ENCODE measurements at regions of chr16 and their contacts with region 1.

Region 1: DNA sequence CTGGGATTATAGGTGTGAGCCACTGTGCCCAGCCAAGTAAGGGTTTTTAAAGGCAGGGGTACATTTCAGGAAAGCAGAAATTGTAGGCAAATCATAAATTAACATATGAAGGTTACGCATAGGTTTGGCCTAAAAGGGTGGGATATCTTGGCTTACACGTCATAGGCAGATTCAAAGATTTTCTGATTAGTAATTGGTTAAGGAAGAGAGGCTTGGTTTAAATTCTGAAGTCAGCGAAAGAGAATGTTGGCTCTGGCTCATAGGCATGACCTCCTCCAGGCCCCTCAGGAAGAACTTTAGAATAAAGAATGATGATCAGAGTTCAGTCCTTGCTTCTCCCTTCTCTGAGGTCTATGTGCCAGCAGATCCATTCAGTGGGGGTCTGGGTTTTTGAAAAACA is 124.8 kb upstream of the RBBP6 start:
- DNase-seq: no peak
- ATAC-seq: no peak
- H3K4me3 ChIP-seq: no peak overlapping the region
- H3K27ac ChIP-seq: no peak overlapping the region
- H3K4me1 ChIP-seq: no peaks in the 10 kb centered on the region
- H3K27me3 ChIP-seq: 0 out of 2 replicates have a peak, but pooled peaks cover 3% of the 10 kb centered on the region
- CTCF ChIP-seq: no peak

Region 2: DNA sequence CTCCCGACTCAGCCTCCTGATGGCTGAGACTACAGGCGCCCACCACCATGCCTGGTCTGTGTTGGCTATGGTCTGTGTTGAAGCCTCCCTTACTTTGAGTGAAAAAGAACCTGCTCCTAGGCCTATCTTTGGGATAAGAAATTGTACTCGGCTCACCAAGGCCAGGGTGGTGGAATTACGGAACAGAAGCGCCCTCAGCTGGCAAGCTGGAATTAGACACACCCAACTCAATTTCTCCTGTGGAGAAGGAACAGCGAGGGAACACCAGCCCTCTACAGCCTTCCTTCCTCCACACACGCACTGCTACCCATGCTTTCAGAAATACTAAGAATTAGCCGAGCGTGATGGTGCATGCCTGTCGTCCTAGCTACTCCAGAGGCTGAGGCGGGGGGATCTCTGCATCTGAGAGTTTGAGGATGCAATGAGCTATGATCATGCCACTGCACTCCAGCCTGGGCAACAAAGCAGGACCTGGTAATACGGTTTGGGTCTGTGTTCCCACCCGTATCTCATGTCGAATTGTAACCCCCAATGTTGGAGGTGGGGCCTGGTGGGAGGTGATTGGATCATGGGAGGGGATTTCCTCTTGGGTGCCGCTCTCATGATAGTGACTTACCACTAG is 84.8 kb after region 1 on chr16:
- CTCF ChIA-PET with region 1: no interaction called
- POLR2A ChIA-PET with region 1: no interaction called
- in situ Hi-C with region 1: no loop called
- intact Hi-C with region 1: loop called (anchors 5 kb)
- DNase-seq: no peak
- ATAC-seq: peak; percentile 91
- H3K4me3 ChIP-seq: no peak overlapping the region
- H3K27ac ChIP-seq: no peak overlapping the region
- H3K4me1 ChIP-seq: no peaks in the 10 kb centered on the region
- H3K27me3 ChIP-seq: no peaks in the 10 kb centered on the region
- CTCF ChIP-seq: peak; percentile 80